Transverse colon (tissue), 4 donors: ENCODE measurements at regions of chrX and their contacts with region 1.

Region 1: DNA sequence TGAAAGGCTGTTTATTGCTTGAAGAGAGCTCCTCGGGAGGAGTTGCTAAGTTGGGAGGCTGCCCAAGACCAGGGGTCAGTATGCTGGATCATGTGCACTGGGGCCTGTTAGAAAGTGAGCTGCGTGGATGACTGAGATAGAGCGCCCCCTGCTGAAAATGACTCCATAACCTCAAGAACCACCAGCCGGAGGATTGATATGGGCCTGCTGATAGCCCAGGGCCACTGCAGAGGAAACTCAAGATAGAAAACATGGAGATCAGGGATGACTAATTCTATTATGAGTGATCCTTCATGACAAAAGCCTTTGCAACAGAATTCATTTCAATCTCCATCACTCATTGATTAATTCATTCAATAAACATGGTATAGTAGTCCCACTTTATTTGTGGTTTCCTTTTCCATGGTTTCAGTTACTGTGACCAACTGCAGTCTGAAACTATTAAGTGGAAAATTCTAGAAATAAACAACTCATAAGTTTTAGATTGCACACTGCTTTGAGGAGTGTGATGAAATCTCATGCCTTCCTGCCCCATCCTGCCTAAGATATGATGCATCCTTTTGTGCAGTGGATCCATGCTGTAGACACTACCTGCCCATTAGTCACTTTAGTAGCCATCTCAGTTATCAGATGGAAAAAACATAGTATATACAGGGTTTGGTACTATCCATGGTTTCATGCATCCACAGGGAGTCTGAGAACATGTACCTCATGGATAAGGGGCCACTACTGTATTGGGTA is 126.7 kb upstream of the MBNL3 start:
- DNase-seq: peak; percentile 51
- H3K4me3 ChIP-seq: no peak overlapping the region
- H3K27ac ChIP-seq: no peak overlapping the region
- H3K4me1 ChIP-seq: no peaks in the 10 kb centered on the region
- H3K27me3 ChIP-seq: no peaks in the 10 kb centered on the region
- CTCF ChIP-seq: peak in 3 of 5 experiments; percentile 32 to 38 (median 36)
- EP300 ChIP-seq: no peak
- POLR2A ChIP-seq: no peak

Region 2: GRCh38 chrX:131841496-131842410 is 773.8 kb before region 1 on chrX:
- in situ Hi-C with region 1: loop called in 1 of 4 experiments (anchors 10 kb)
- intact Hi-C with region 1: no loop called
- DNase-seq: peak; percentile 17
- H3K4me3 ChIP-seq: no peak overlapping the region
- H3K27ac ChIP-seq: no peak overlapping the region
- H3K4me1 ChIP-seq: no peaks in the 10 kb centered on the region
- H3K27me3 ChIP-seq: no peaks in the 10 kb centered on the region
- CTCF ChIP-seq: peak; percentile 61 to 90 (median 69)
- EP300 ChIP-seq: no peak
- POLR2A ChIP-seq: no peak

Region 3: GRCh38 chrX:131854581-131854980 is 761.0 kb before region 1 on chrX:
- in situ Hi-C with region 1: loop called (anchors 10 to 25 kb)
- intact Hi-C with region 1: no loop called
- DNase-seq: no peak
- H3K4me3 ChIP-seq: no peak overlapping the region
- H3K27ac ChIP-seq: no peak overlapping the region
- H3K4me1 ChIP-seq: no peaks in the 10 kb centered on the region
- H3K27me3 ChIP-seq: no peaks in the 10 kb centered on the region
- CTCF ChIP-seq: no peak
- EP300 ChIP-seq: no peak
- POLR2A ChIP-seq: no peak

Region 4: DNA sequence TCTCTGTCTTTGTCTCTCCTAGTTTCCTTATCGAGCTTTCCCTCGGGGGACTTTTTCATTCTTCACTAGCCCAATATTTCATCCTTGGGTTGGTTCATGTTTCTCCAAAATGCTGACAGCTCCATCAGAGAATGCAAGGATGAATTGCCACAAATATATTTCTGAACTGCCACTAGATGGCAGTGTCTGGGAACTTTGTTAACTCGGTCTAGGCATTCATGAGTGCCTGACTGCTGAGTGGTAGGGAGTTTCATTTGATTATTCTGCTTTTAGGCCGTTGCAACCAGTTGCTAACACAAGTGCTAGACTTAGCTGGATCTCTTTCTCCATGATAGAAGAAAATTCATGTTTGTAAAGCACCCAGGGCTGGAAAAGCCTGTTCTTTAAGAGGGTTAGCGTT is 322.8 kb before region 1 on chrX:
- in situ Hi-C with region 1: loop called in 3 of 4 experiments (anchors 10 to 25 kb)
- intact Hi-C with region 1: no loop called
- DNase-seq: peak; percentile 12
- H3K4me3 ChIP-seq: no peak overlapping the region
- H3K27ac ChIP-seq: no peak overlapping the region
- H3K4me1 ChIP-seq: no peaks in the 10 kb centered on the region
- H3K27me3 ChIP-seq: no peaks in the 10 kb centered on the region
- CTCF ChIP-seq: peak; percentile 43 to 70 (median 53)
- EP300 ChIP-seq: no peak
- POLR2A ChIP-seq: no peak

Region 5: DNA sequence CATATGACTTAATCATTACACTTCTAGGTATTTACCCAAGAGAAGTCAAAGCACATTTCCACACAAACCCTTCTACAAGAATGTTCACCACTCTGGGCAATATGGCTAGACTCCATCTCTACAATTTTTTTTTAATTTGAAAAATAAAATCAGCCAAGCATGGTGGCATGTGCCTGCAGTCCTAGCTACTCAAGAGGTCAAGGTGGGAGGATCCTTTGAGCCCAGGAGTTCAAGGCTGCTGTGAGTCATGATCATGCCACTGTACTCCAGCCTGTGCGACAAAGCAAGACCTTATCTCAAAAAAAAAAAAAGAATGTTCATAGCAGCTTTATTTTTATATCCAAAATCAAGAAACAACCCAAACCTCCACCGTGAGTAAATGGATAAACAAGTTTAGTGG is 56.5 kb before region 1 on chrX:
- in situ Hi-C with region 1: no loop called
- intact Hi-C with region 1: no loop called
- DNase-seq: no peak
- H3K4me3 ChIP-seq: no peak overlapping the region
- H3K27ac ChIP-seq: no peak overlapping the region
- H3K4me1 ChIP-seq: no peaks in the 10 kb centered on the region
- H3K27me3 ChIP-seq: no peaks in the 10 kb centered on the region
- CTCF ChIP-seq: no peak
- EP300 ChIP-seq: no peak
- POLR2A ChIP-seq: no peak

Region 6: DNA sequence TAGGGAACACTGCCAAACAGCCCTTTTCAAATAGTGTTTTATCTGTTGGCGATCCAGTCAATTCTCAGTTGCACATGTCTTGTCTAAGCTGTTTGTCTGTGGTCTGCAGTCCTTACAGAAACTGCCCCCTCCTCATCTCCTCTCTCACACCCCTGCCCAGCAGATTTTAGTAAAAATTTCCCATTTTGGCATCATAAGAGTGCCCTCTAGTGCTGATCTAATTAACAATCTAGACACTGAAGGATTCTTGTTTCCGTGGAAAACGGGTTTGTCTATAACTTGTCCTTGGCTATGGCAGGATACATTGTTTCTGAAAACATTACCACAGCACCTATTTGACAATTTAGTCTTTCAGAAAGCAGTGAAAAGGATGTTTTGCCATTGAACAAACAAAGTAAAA is 100.4 kb after region 1 on chrX:
- in situ Hi-C with region 1: no loop called
- intact Hi-C with region 1: no loop called
- DNase-seq: no peak
- H3K4me3 ChIP-seq: no peak overlapping the region
- H3K27ac ChIP-seq: no peak overlapping the region
- H3K4me1 ChIP-seq: no peaks in the 10 kb centered on the region
- H3K27me3 ChIP-seq: no peaks in the 10 kb centered on the region
- CTCF ChIP-seq: peak in 1 of 5 experiments; percentile 5
- EP300 ChIP-seq: no peak
- POLR2A ChIP-seq: no peak

Region 7: DNA sequence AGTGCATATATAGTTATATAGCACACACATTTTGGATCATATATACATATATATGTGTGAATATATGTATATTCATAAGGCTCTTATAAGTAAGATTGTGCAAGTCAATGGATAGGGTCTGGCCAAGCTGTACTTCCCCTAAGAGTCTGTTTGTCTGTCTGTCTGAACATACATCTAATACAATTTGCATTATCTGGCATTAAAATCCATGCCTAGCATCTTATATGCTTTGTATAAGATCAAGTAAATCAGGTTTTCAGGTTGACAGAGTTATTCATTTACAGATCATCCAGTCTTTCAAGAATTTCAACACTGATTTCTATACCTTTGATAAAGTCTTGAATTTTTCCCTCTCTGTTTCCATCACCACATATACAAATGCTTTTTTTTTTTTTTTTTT is 526.8 kb after region 1 on chrX:
- in situ Hi-C with region 1: no loop called
- intact Hi-C with region 1: no loop called
- DNase-seq: no peak
- H3K4me3 ChIP-seq: no peak overlapping the region
- H3K27ac ChIP-seq: no peak overlapping the region
- H3K4me1 ChIP-seq: no peaks in the 10 kb centered on the region
- H3K27me3 ChIP-seq: no peaks in the 10 kb centered on the region
- CTCF ChIP-seq: no peak
- EP300 ChIP-seq: no peak
- POLR2A ChIP-seq: no peak